Activated CD4-positive, alpha-beta memory T cell treated with anti-CD3 and anti-CD28 coated beads for 36 hours (primary cell): ENCODE measurements at regions of chr5 and their contacts with region 1.

Region 1: DNA sequence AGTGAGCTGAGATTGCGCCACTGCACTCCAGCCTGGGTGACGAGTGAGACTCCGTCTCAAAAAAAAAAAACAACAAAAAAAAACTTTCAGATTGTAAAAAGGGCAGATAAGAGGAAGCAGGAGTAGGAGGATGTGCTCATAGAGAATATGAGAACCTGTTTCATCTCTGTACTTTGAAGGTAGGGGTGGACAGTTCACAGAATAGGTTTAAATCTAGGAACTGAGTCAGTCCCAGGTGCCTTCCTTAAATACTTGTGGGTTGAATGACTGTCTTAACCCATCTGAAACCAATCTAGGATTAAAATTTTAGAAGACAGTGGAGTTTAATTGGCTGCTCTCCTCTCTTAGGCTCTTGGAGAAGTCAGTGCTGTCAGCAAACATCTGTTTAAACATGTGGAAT is 12.4 kb downstream of the POLK start:
- DNase-seq: peak; percentile 37
- H3K4me3 Mint-ChIP-seq: no peak overlapping the region
- H3K27ac Mint-ChIP-seq: peak overlapping the region; percentile 57
- H3K4me1 Mint-ChIP-seq: peaks cover 63% of the 10 kb centered on the region
- H3K27me3 Mint-ChIP-seq: no peaks in the 10 kb centered on the region

Region 2: GRCh38 chr5:75405296-75405695 is 118.8 kb before region 1 on chr5:
- CTCF ChIA-PET with region 1: no interaction called
- POLR2A ChIA-PET with region 1: no interaction called
- intact Hi-C with region 1: no loop called
- DNase-seq: no peak
- H3K4me3 Mint-ChIP-seq: no peak overlapping the region
- H3K27ac Mint-ChIP-seq: no peak overlapping the region
- H3K4me1 Mint-ChIP-seq: peaks cover 5% of the 10 kb centered on the region
- H3K27me3 Mint-ChIP-seq: no peaks in the 10 kb centered on the region

Region 3: GRCh38 chr5:75473463-75473862 is 50.6 kb before region 1 on chr5:
- CTCF ChIA-PET with region 1: no interaction called
- POLR2A ChIA-PET with region 1: no interaction called
- intact Hi-C with region 1: no loop called
- DNase-seq: no peak
- H3K4me3 Mint-ChIP-seq: no peak overlapping the region
- H3K27ac Mint-ChIP-seq: no peak overlapping the region
- H3K4me1 Mint-ChIP-seq: peaks cover 2% of the 10 kb centered on the region
- H3K27me3 Mint-ChIP-seq: no peaks in the 10 kb centered on the region

Region 4: GRCh38 chr5:75574791-75575190 is 50.7 kb after region 1 on chr5:
- CTCF ChIA-PET with region 1: no interaction called
- POLR2A ChIA-PET with region 1: no interaction called
- intact Hi-C with region 1: loop called (anchors 2 kb)
- DNase-seq: no peak
- H3K4me3 Mint-ChIP-seq: no peak overlapping the region
- H3K27ac Mint-ChIP-seq: peak overlapping the region; percentile 92
- H3K4me1 Mint-ChIP-seq: peaks cover 23% of the 10 kb centered on the region
- H3K27me3 Mint-ChIP-seq: no peaks in the 10 kb centered on the region